ENCODE measurements at regions of chr22 and their contacts with region 1.

Region 1: GRCh38 chr22:37608477-37609239 is at the start of gene GGA1:
- DNase-seq: peak; percentile 98
- H3K4me3 Mint-ChIP-seq: peak within 1 kb of the TSS; percentile 86
- H3K27ac Mint-ChIP-seq: peak within 1 kb of the TSS; percentile 98
- H3K4me1 Mint-ChIP-seq: peaks cover 50% of the 10 kb centered on the region
- H3K27me3 Mint-ChIP-seq: no peaks in the 10 kb centered on the region
- total RNA-seq, gene GGA1: 46.1 to 49.1 TPM

Region 2: DNA sequence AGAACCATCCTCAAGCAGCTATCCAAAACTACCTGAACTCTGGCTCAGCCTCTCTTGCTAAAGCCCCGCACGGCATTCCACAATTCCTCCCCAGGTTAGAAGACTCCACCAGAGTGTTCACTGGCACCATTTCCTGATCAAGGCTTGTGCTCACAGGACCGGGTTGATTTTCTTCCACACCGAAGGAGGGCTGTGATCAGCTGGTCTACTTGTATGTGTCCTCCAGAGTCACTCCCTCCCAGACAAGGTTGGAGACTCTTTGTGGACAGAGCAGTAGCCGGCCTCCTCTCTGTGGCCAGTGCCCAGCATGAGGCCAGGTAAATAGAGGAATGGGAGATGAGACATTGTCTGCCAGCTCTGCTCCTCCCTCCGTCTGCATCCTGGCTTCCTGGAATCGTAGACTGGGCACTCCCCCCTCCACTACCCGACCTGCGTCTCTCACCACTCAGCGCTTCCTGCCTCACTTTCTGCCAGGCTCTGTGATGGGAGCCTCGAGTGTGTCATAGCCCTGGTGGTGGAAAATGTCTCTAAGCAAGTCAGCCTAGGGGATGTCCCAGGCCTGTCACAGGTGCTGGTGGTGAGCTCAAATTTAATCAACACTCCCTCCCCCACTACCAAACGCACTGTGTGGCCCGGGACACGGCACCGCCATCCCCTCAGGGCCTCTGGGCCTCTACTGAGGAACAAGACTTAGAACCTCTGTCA is 486.6 kb before region 1 on chr22:
- CTCF ChIA-PET with region 1: no interaction called
- intact Hi-C with region 1: loop called (anchors 1 kb)
- DNase-seq: peak; percentile 98
- H3K4me3 Mint-ChIP-seq: peak overlapping the region; percentile 85
- H3K27ac Mint-ChIP-seq: peak overlapping the region; percentile 99
- H3K4me1 Mint-ChIP-seq: peaks cover 73% of the 10 kb centered on the region
- H3K27me3 Mint-ChIP-seq: no peaks in the 10 kb centered on the region

Region 3: GRCh38 chr22:37581504-37581903 is 27.2 kb before region 1 on chr22:
- CTCF ChIA-PET with region 1: interaction called, 14 read pairs
- intact Hi-C with region 1: no loop called
- DNase-seq: no peak
- H3K4me3 Mint-ChIP-seq: no peak overlapping the region
- H3K27ac Mint-ChIP-seq: no peak overlapping the region
- H3K4me1 Mint-ChIP-seq: peaks cover 14% of the 10 kb centered on the region
- H3K27me3 Mint-ChIP-seq: no peaks in the 10 kb centered on the region

Region 4: GRCh38 chr22:37623075-37624016 is 14.7 kb after region 1 on chr22:
- CTCF ChIA-PET with region 1: interaction called, 29 read pairs
- intact Hi-C with region 1: loop called (anchors 2 kb)
- DNase-seq: peak; percentile 86
- H3K4me3 Mint-ChIP-seq: no peak overlapping the region
- H3K27ac Mint-ChIP-seq: peak overlapping the region; percentile 84
- H3K4me1 Mint-ChIP-seq: peaks cover 40% of the 10 kb centered on the region
- H3K27me3 Mint-ChIP-seq: no peaks in the 10 kb centered on the region

Region 5: GRCh38 chr22:37658133-37659065 is 49.7 kb after region 1 on chr22 and contains the start of gene PDXP:
- CTCF ChIA-PET with region 1: interaction called, 3 read pairs
- intact Hi-C with region 1: loop called (anchors 1 kb)
- DNase-seq: peak; percentile 98
- H3K4me3 Mint-ChIP-seq: peak within 1 kb of the TSS; percentile 92
- H3K27ac Mint-ChIP-seq: peak within 1 kb of the TSS; percentile 83
- H3K4me1 Mint-ChIP-seq: peaks cover 39% of the 10 kb centered on the region
- H3K27me3 Mint-ChIP-seq: no peaks in the 10 kb centered on the region
- total RNA-seq, gene PDXP: 17.4 to 19.2 TPM

Region 6: DNA sequence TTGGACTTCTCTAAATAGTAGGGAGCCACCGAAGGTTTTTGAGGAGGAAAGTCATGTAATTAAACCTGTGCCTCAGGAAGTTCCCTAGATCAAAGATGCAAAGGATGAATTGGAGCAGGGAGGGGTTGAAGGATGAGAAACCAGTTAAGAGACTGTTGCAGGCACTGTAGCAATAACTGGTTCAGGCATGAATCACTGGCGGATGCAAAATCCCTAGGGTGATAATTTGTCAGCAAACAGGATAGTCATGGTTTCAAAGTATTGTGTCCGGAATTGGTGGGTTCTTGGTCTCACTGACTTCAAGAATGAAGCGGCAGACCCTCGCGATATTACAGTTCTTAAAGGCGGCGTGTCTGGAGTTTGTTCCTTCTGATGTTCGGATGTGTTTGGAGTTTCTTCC is 108.0 kb after region 1 on chr22:
- CTCF ChIA-PET with region 1: no interaction called
- intact Hi-C with region 1: no loop called
- DNase-seq: no peak
- H3K4me3 Mint-ChIP-seq: no peak overlapping the region
- H3K27ac Mint-ChIP-seq: no peak overlapping the region
- H3K4me1 Mint-ChIP-seq: peaks cover 2% of the 10 kb centered on the region
- H3K27me3 Mint-ChIP-seq: no peaks in the 10 kb centered on the region

Region 7: GRCh38 chr22:37807410-37808293 is 199.0 kb after region 1 on chr22 and contains the start of gene GCAT:
- CTCF ChIA-PET with region 1: no interaction called
- intact Hi-C with region 1: loop called (anchors 5 kb)
- DNase-seq: peak; percentile 96
- H3K4me3 Mint-ChIP-seq: peak within 1 kb of the TSS; percentile 80
- H3K27ac Mint-ChIP-seq: peak within 1 kb of the TSS; percentile 61
- H3K4me1 Mint-ChIP-seq: peaks cover 45% of the 10 kb centered on the region
- H3K27me3 Mint-ChIP-seq: peaks cover 48% of the 10 kb centered on the region
- total RNA-seq, gene GCAT: 26.9 to 27.2 TPM

Region 8: DNA sequence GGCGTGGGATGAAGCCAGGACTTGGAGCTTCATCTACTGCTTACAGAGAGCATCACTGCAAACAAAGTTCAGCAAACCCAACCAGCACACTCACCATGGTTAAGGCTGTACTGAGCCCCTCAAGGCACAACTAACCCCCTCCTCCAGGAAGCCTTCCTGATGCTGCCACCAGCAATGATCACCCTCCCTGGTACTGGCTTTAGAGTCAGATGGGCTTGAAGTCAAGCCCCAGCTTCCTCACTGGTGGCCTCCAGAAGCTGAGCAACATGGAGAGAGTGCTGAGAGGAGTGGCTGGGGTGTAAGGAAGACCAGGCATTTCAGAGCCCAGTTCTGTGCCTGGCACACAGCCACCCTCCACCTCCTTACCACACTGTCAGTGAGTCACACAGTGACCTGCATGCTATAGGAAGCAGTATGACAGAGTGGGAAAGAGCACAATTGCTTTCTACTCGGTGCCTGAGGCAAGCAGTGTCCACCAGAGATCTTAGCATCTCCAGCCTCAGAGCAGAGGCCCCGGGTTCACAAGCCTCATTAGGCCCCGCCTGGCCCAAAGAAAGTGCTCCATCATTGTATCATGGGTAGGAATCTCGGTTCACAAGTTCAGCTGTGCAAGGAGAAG is 526.6 kb after region 1 on chr22:
- CTCF ChIA-PET with region 1: no interaction called
- intact Hi-C with region 1: no loop called
- DNase-seq: no peak
- H3K4me3 Mint-ChIP-seq: no peak overlapping the region
- H3K27ac Mint-ChIP-seq: no peak overlapping the region
- H3K4me1 Mint-ChIP-seq: no peaks in the 10 kb centered on the region
- H3K27me3 Mint-ChIP-seq: no peaks in the 10 kb centered on the region

Measured in activated naive CD4-positive, alpha-beta T cell treated with anti-CD3 and anti-CD28 coated beads for 36 hours (primary cell).